Gastrocnemius medialis (tissue), 4 donors: ENCODE measurements at regions of chr14 and their contacts with region 1.

Region 1: GRCh38 chr14:52950898-52951689 is at the start of gene FERMT2:
- DNase-seq: peak; percentile 73 to 86
- ATAC-seq: peak; percentile 86 to 88
- H3K4me3 ChIP-seq: peak within 1 kb of the TSS; percentile 81 to 98 (median 91)
- H3K27ac ChIP-seq: peak within 1 kb of the TSS; percentile 96 to 99 (median 98)
- H3K4me1 ChIP-seq: peaks cover 30 to 31% of the 10 kb centered on the region in 2 donors
- H3K27me3 ChIP-seq: no peaks in the 10 kb centered on the region
- CTCF ChIP-seq: peak in 1 of 5 experiments; percentile 20
- POLR2A ChIP-seq: peak; percentile 72 to 86
- total RNA-seq, gene FERMT2: 44.0 to 75.9 (median 59.7) TPM

Region 2: GRCh38 chr14:52695481-52696091 is 255.5 kb before region 1 on chr14 and contains the start of gene ERO1A:
- in situ Hi-C with region 1: loop called in 1 of 4 experiments (anchors 10 kb)
- intact Hi-C with region 1: no loop called
- DNase-seq: peak; percentile 79 to 81
- ATAC-seq: peak; percentile 95
- H3K4me3 ChIP-seq: peak within 1 kb of the TSS; percentile 72 to 98 (median 86)
- H3K27ac ChIP-seq: peak within 1 kb of the TSS; percentile 95 to 98 (median 96)
- H3K4me1 ChIP-seq: peaks cover 8 to 19% of the 10 kb centered on the region in 2 donors
- H3K27me3 ChIP-seq: no peaks in the 10 kb centered on the region
- CTCF ChIP-seq: no peak
- POLR2A ChIP-seq: peak; percentile 84
- total RNA-seq, gene ERO1A: 11.9 to 25.6 (median 19.1) TPM

Region 3: GRCh38 chr14:52706724-52707706 is 244.1 kb before region 1 on chr14 and contains the start of gene PSMC6:
- in situ Hi-C with region 1: no loop called
- intact Hi-C with region 1: loop called (anchors 5 kb)
- DNase-seq: peak; percentile 93 to 94
- ATAC-seq: peak; percentile 98
- H3K4me3 ChIP-seq: peak within 1 kb of the TSS; percentile 76 to 94 (median 88)
- H3K27ac ChIP-seq: peak within 1 kb of the TSS; percentile 92 to 95 (median 94)
- H3K4me1 ChIP-seq: peaks cover 16 to 20% of the 10 kb centered on the region in 2 donors
- H3K27me3 ChIP-seq: no peaks in the 10 kb centered on the region
- CTCF ChIP-seq: no peak
- POLR2A ChIP-seq: peak; percentile 67 to 78
- total RNA-seq, gene PSMC6: 158 to 251 (median 178) TPM

Region 4: GRCh38 chr14:52923902-52924575 is 27.1 kb before region 1 on chr14:
- in situ Hi-C with region 1: no loop called
- intact Hi-C with region 1: loop called (anchors 2 kb)
- DNase-seq: no peak
- ATAC-seq: peak; percentile 67 to 83
- H3K4me3 ChIP-seq: no peak overlapping the region
- H3K27ac ChIP-seq: peak overlapping the region in 2 of 4 donors; percentile 5 to 40
- H3K4me1 ChIP-seq: peaks cover 68 to 91% of the 10 kb centered on the region in 2 donors
- H3K27me3 ChIP-seq: no peaks in the 10 kb centered on the region
- CTCF ChIP-seq: peak in 3 of 5 experiments; percentile 33 to 50 (median 33)
- POLR2A ChIP-seq: no peak

Region 5: DNA sequence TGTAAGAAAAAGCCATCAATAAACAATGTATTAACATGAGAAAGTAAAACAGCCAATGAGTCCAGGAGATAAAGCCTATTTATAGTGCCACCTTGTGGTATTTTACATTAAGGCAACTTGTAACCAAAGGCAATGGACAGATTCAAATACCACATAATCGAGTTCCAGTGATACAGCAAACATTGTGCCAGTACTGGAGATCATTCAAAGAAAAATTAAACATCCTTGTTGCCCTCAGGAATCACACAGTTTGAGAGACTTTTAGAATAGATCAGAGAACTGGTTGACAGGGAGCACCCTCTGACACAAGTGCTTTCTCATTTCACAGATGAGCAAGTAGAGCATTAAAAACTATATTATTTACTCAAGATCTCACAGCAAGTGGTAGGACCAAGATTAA is 103.9 kb after region 1 on chr14:
- in situ Hi-C with region 1: no loop called
- intact Hi-C with region 1: loop called (anchors 5 kb)
- DNase-seq: no peak
- ATAC-seq: peak in 1 of 2 donors; percentile 74
- H3K4me3 ChIP-seq: no peak overlapping the region
- H3K27ac ChIP-seq: no peak overlapping the region
- H3K4me1 ChIP-seq: no peaks in the 10 kb centered on the region
- H3K27me3 ChIP-seq: no peaks in the 10 kb centered on the region
- CTCF ChIP-seq: peak in 4 of 5 experiments; percentile 35 to 72 (median 60)
- POLR2A ChIP-seq: no peak

Region 6: GRCh38 chr14:53152890-53153701 is 202.0 kb after region 1 on chr14 and contains the start of gene DDHD1:
- in situ Hi-C with region 1: no loop called
- intact Hi-C with region 1: loop called (anchors 5 kb)
- DNase-seq: peak; percentile 51 to 69
- ATAC-seq: peak; percentile 82 to 84
- H3K4me3 ChIP-seq: peak within 1 kb of the TSS; percentile 78 to 97 (median 88)
- H3K27ac ChIP-seq: peak within 1 kb of the TSS; percentile 78 to 94 (median 90)
- H3K4me1 ChIP-seq: peaks cover 5 to 22% of the 10 kb centered on the region in 2 donors
- H3K27me3 ChIP-seq: no peaks in the 10 kb centered on the region
- CTCF ChIP-seq: no peak
- POLR2A ChIP-seq: peak; percentile 67 to 83
- total RNA-seq, gene DDHD1: 4.4 to 10.1 (median 6.8) TPM